CD8-positive, alpha-beta T cell (primary cell): ENCODE measurements at regions of chr2 and their contacts with region 1.

Region 1: DNA sequence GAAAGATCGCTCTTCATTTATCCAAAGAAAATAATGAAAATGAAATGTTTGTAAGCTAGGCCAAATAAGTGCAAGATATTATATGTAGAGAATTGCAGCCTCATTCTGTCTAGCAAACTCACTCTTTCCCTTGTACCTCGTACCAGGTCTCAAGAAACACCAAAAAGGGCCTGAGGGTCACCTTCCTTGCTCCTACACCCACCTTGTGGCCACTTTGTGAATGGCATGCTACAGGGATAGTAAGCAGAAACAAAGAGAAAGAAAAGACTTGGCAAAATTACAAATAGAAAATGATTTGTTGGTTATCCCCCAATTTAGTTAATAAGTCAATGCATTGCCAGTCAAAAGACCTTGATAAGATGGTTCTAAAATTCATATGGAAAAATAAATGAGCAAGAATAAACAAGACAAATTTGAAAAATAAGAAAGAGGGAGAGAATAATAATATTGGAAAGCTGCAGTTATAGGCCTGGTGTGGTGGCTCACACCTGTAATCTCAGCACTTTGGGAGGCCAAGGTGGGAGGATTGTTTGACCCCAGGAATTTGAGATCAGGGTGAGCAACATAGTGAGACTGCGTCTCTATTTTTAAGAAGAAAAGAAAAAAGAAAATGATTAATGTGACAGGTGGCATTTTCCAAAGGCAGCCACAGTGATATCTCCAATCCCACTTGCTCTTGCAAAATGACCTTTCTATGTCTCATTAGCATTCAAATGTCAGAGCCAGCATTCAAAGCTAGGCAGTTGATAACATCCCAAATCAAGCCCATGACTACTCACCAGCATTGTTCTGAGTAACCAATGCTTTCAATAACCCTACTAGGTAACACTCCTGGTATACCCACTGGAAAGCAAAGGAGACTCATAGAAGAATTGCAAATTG is 38.8 kb upstream of the BMP10 start:
- DNase-seq: peak; percentile 36 to 82 (median 70)
- ATAC-seq: peak; percentile 21
- H3K4me3 ChIP-seq: no peak overlapping the region
- H3K4me3 Mint-ChIP-seq: no peak overlapping the region
- H3K27ac ChIP-seq: no peak overlapping the region
- H3K27ac Mint-ChIP-seq: peak overlapping the region; percentile 42
- H3K4me1 ChIP-seq: peaks cover 34% of the 10 kb centered on the region
- H3K4me1 Mint-ChIP-seq: peaks cover 34% of the 10 kb centered on the region
- H3K27me3 ChIP-seq: no peaks in the 10 kb centered on the region
- H3K27me3 Mint-ChIP-seq: no peaks in the 10 kb centered on the region
- CTCF ChIP-seq: peak; percentile 98

Region 2: DNA sequence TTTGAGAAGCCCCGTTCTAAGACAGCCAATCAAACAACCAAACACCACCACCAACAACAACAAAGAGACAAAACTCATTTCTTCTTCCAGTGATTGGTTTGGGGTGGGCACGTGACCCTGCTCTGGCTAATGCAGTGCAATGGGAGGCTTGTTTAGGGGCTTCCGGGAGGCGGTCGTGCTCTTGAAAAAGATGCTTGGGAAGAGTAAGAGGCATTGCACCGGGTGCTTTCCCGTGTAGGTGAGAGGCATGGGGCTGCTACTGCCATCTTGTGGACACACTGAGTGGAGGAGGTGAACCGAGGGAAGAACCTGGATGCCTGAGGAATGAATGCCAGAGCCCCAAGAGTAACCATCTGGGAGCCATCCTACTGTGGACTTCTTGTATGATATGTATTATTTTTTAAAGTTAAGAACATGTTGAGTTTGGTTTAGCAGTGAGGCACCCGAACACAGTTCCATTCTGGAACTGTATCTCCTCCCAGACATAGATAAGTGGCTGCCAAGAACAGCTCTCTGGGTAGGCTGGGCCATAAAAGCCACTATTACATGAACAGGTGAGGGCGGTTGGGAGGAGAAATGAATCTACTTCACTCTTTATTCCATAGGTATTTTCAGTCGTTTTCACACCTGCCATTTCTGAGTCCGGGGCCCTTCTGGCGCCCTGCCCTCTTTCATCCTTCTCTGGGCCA is 194.5 kb before region 1 on chr2:
- CTCF ChIA-PET with region 1: interaction called, 78 read pairs
- POLR2A ChIA-PET with region 1: interaction called, 4 read pairs
- intact Hi-C with region 1: no loop called
- DNase-seq: peak in 6 of 9 experiments; percentile 16 to 79 (median 60)
- ATAC-seq: peak; percentile 47
- H3K4me3 ChIP-seq: no peak overlapping the region
- H3K4me3 Mint-ChIP-seq: no peak overlapping the region
- H3K27ac ChIP-seq: no peak overlapping the region
- H3K27ac Mint-ChIP-seq: peak overlapping the region; percentile 11
- H3K4me1 ChIP-seq: peaks cover 53% of the 10 kb centered on the region
- H3K4me1 Mint-ChIP-seq: peaks cover 62% of the 10 kb centered on the region
- H3K27me3 ChIP-seq: peaks cover 0 to 3% of the 10 kb centered on the region in 2 experiments
- H3K27me3 Mint-ChIP-seq: no peaks in the 10 kb centered on the region
- CTCF ChIP-seq: no peak

Region 3: DNA sequence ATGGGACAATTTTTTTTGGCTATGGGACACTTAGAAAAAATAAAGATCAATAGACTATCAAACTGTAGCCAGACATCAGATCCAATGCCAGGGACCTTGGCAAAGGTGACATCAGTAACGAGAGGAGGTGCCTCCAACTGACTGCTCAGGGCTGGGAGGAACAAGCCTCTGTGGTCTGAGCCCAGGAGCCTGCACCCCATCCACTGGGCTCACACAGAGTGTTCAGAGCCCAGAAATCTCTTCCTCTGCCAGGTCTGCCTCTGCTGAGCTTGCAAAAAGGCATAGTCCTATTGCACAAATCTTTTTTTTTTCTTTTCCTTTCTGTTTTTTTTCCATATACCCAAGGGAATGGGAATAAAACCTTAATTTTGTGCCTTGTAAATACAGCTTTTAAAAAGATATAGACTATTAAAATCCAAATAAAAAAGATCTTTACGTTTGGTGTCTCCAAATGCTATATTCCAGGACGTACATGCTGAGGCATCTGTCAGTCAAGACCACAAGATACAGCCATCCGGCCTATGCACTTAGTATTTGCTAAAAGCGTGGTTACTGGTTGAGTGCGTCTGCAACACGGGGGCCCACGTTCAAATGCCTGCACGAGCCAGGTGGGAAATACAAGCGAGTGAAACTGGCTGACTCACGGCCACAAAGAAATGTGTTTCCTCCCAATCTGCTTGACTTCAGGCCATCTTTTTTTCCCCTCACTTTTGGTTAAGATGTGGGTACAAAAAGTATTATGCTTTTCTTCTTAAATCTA is 183.2 kb before region 1 on chr2:
- CTCF ChIA-PET with region 1: interaction called, 29 read pairs
- POLR2A ChIA-PET with region 1: interaction called, 7 read pairs
- intact Hi-C with region 1: loop called (anchors 1 to 5 kb)
- DNase-seq: peak; percentile 48 to 92 (median 81)
- ATAC-seq: peak; percentile 98
- H3K4me3 ChIP-seq: no peak overlapping the region
- H3K4me3 Mint-ChIP-seq: peak overlapping the region; percentile 22
- H3K27ac ChIP-seq: peak overlapping the region in 1 of 2 experiments; percentile 60
- H3K27ac Mint-ChIP-seq: peak overlapping the region; percentile 82
- H3K4me1 ChIP-seq: peaks cover 37% of the 10 kb centered on the region
- H3K4me1 Mint-ChIP-seq: peaks cover 54% of the 10 kb centered on the region
- H3K27me3 ChIP-seq: no peaks in the 10 kb centered on the region
- H3K27me3 Mint-ChIP-seq: no peaks in the 10 kb centered on the region
- CTCF ChIP-seq: no peak

Region 4: GRCh38 chr2:68742626-68743415 is 167.2 kb before region 1 on chr2:
- CTCF ChIA-PET with region 1: interaction called, 32 read pairs
- POLR2A ChIA-PET with region 1: interaction called, 3 read pairs
- intact Hi-C with region 1: no loop called
- DNase-seq: peak in 3 of 9 experiments; percentile 3 to 35 (median 11)
- ATAC-seq: no peak
- H3K4me3 ChIP-seq: no peak overlapping the region
- H3K4me3 Mint-ChIP-seq: peak overlapping the region; percentile 17
- H3K27ac ChIP-seq: peak overlapping the region in 1 of 2 experiments; percentile 18
- H3K27ac Mint-ChIP-seq: peak overlapping the region; percentile 42
- H3K4me1 ChIP-seq: peaks cover 82% of the 10 kb centered on the region
- H3K4me1 Mint-ChIP-seq: peaks cover 90% of the 10 kb centered on the region
- H3K27me3 ChIP-seq: no peaks in the 10 kb centered on the region
- H3K27me3 Mint-ChIP-seq: no peaks in the 10 kb centered on the region
- CTCF ChIP-seq: no peak

Region 5: DNA sequence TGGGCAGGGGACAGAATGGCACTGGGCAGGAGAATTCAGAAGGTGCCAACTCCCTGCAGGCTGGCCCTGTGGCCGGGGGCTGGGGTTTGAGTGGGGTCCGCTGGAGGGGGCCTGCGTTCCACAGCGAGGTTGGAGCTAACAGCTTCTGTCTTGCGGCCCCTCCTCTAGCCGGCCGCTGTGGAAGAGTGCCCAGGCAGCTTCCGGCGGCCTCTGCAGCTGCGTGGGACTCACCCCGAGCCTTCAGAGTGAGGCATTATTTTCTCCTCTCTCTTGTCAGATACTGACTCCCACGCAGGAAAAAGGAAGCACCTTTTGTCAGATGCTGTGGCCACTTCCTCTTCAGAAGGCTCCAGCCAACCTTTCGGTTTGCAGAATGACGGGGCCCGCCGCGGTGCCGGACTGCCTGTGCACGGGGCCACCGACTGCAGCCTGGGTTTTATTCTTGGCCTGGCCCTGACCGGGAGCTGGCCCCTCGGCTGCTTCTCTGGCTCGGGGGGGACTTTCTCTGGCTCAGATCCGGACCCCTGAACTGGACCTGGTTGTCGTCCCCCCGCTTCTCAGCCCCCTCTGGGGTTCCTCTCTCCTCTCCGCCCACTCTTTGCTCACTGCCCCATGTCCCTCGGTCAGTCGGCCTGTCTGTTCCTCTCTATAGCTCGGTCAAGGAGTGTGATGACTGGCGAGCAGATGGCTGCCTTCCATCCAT is 135.3 kb before region 1 on chr2:
- CTCF ChIA-PET with region 1: interaction called, 18 read pairs
- POLR2A ChIA-PET with region 1: no interaction called
- intact Hi-C with region 1: loop called in 1 of 2 experiments (anchors 5 kb)
- DNase-seq: peak; percentile 15 to 84 (median 58)
- ATAC-seq: peak; percentile 38
- H3K4me3 ChIP-seq: peak overlapping the region; percentile 61 to 85
- H3K4me3 Mint-ChIP-seq: peak overlapping the region; percentile 84
- H3K27ac ChIP-seq: peak overlapping the region; percentile 64 to 88
- H3K27ac Mint-ChIP-seq: peak overlapping the region; percentile 100
- H3K4me1 ChIP-seq: peaks cover 81% of the 10 kb centered on the region
- H3K4me1 Mint-ChIP-seq: peaks cover 89% of the 10 kb centered on the region
- H3K27me3 ChIP-seq: no peaks in the 10 kb centered on the region
- H3K27me3 Mint-ChIP-seq: no peaks in the 10 kb centered on the region
- CTCF ChIP-seq: no peak